Left colon (tissue), 2 donors: ENCODE measurements at regions of chr18 and their contacts with region 1.

Region 1: GRCh38 chr18:51051105-51051712 is 21.2 kb downstream of the SMAD4 start:
- DNase-seq: no peak
- ATAC-seq: peak; percentile 82

Region 2: GRCh38 chr18:50791599-50792438 is 259.4 kb before region 1 on chr18:
- intact Hi-C with region 1: no loop called
- DNase-seq: no peak
- ATAC-seq: peak; percentile 72

Region 3: GRCh38 chr18:50819728-50820378 is 231.4 kb before region 1 on chr18 and contains the start of gene MRO:
- intact Hi-C with region 1: loop called in 1 of 2 experiments (anchors 5 kb)
- DNase-seq: peak; percentile 80 to 90
- ATAC-seq: peak; percentile 96
- total RNA-seq, gene MRO: 0.25 TPM in 1 of 2 donors, not detected in the other

Region 4: DNA sequence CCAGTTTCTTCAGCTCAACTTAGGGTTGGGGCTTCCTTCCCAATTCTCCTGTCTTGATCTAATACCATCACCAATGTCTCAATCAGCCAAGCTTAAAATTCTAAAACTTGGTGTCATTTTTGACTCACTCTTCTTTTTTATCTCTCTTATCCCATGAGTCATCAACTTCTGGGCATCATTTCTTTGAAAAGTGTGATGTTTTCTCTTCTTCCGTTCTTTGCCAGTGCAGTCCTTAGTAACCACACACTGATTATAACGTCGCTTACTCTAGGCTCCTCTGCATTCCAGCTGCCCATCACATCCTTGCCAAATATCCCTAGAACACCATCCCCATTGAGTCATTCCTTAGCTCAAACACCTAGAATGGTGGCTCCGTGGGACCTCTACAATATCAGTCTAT is 204.0 kb before region 1 on chr18:
- intact Hi-C with region 1: no loop called
- DNase-seq: no peak
- ATAC-seq: no peak